PC-9 (cell line): ENCODE measurements at regions of chr4 and their contacts with region 1.

Region 1: GRCh38 chr4:156999175-156999516 is 27.5 kb upstream of the PDGFC start:
- DNase-seq: peak; percentile 85 to 90
- H3K4me3 ChIP-seq: peak overlapping the region; percentile 28
- H3K27ac ChIP-seq: peak overlapping the region; percentile 69
- H3K4me1 ChIP-seq: peaks cover 26% of the 10 kb centered on the region
- H3K27me3 ChIP-seq: no peaks in the 10 kb centered on the region
- CTCF ChIP-seq: no peak

Region 2: GRCh38 chr4:156931267-156931666 is 67.9 kb before region 1 on chr4:
- CTCF ChIA-PET with region 1: no interaction called
- POLR2A ChIA-PET with region 1: no interaction called
- intact Hi-C with region 1: loop called (anchors 1 kb)
- DNase-seq: peak; percentile 62 to 73
- H3K4me3 ChIP-seq: no peak overlapping the region
- H3K27ac ChIP-seq: peak overlapping the region; percentile 78
- H3K4me1 ChIP-seq: peaks cover 16% of the 10 kb centered on the region
- H3K27me3 ChIP-seq: no peaks in the 10 kb centered on the region
- CTCF ChIP-seq: no peak

Region 3: DNA sequence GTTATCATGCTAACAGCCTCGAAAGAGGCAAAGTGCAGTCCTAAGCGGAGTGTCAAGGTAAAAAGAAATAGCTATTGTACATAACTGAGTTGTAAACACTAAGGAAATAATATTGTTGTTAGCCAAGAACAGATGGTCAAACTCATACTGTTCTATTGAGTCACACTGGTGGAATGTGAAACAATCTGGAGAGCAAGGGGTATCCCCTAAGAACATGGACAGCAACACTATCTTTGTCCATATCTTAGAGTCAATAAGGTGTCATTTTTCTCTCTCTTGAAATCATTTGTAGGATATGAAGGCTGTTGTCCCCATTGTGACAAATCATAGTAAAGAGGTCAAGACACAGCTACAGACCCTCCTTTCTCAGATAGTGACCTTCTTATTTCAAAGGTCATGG is 23.0 kb before region 1 on chr4:
- CTCF ChIA-PET with region 1: interaction called, 5 read pairs
- POLR2A ChIA-PET with region 1: interaction called, 7 read pairs
- intact Hi-C with region 1: loop called (anchors 1 kb)
- DNase-seq: peak; percentile 13 to 52
- H3K4me3 ChIP-seq: no peak overlapping the region
- H3K27ac ChIP-seq: no peak overlapping the region
- H3K4me1 ChIP-seq: no peaks in the 10 kb centered on the region
- H3K27me3 ChIP-seq: no peaks in the 10 kb centered on the region
- CTCF ChIP-seq: no peak

Region 4: GRCh38 chr4:157012781-157013180 is 13.6 kb after region 1 on chr4:
- CTCF ChIA-PET with region 1: no interaction called
- POLR2A ChIA-PET with region 1: interaction called, 5 read pairs
- intact Hi-C with region 1: loop called (anchors 1 kb)
- DNase-seq: peak; percentile 20 to 61
- H3K4me3 ChIP-seq: no peak overlapping the region
- H3K27ac ChIP-seq: no peak overlapping the region
- H3K4me1 ChIP-seq: no peaks in the 10 kb centered on the region; the same call in 1 of the 2 replicates
- H3K27me3 ChIP-seq: no peaks in the 10 kb centered on the region
- CTCF ChIP-seq: no peak

Region 5: GRCh38 chr4:157231525-157231924 is 232.4 kb after region 1 on chr4:
- CTCF ChIA-PET with region 1: no interaction called
- POLR2A ChIA-PET with region 1: interaction called, 10 read pairs
- intact Hi-C with region 1: no loop called
- DNase-seq: no peak
- H3K4me3 ChIP-seq: no peak overlapping the region
- H3K27ac ChIP-seq: no peak overlapping the region
- H3K4me1 ChIP-seq: no peaks in the 10 kb centered on the region
- H3K27me3 ChIP-seq: no peaks in the 10 kb centered on the region
- CTCF ChIP-seq: no peak

Region 6: GRCh38 chr4:157421365-157421764 is 422.2 kb after region 1 on chr4:
- CTCF ChIA-PET with region 1: no interaction called
- POLR2A ChIA-PET with region 1: no interaction called
- intact Hi-C with region 1: no loop called
- DNase-seq: no peak
- H3K4me3 ChIP-seq: no peak overlapping the region
- H3K27ac ChIP-seq: no peak overlapping the region
- H3K4me1 ChIP-seq: no peaks in the 10 kb centered on the region
- H3K27me3 ChIP-seq: no peaks in the 10 kb centered on the region
- CTCF ChIP-seq: no peak